HCT116 (cell line): ENCODE measurements at regions of chr6 and their contacts with region 1.

Region 1: DNA sequence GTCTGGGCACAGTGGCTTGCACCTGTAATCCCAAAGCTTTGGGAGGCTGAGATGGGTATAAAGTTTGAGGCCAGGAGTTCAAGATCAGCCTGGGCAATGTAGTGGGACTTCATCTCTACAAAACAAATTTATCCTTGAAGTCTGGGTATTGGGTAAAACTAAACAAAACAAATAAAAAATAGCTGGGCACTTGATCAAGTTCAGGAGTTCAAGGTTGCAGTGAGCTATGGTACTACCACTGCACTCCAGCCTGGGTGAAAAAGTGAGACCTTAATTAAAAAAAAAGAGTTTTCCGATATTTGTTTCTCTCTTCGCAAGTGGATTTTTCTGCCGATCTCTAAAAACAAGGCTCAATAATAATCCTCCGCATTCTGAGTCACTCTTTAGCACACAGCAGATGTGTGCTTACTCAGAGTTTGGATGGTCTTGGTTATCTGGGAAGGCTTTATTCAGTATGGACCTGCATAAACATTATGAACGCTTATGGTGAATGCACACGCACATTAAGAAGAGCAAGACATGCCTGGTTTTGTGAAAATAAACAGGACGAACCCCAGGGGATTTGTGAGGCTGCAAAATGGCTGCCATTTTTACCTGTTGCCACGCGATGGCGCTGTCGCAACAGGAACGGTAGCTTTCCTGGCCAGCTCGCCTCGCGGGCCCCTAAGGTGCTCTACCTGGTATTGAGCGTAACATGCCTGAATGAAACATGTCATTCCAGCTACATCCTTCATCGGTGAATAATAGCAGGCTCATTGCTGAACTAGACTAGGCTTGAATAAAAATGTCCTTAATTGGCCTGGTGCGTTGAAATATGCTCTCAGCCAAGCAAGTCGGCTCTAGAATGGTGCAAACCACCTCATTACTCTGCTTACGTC is 6.0 kb downstream of the OPN5 start:
- DNase-seq: peak; percentile 58
- ATAC-seq: peak; percentile 96
- H3K4me3 ChIP-seq: 0 out of 4 replicates have a peak overlapping the region, but pooled peaks of 1 of the 2 experiments have one; percentile 1
- H3K27ac ChIP-seq: no peak overlapping the region
- H3K4me1 ChIP-seq: peaks cover 0 to 6% of the 10 kb centered on the region in 2 experiments; a peak in 1 of 4 replicates
- H3K27me3 ChIP-seq: no peaks in the 10 kb centered on the region
- CTCF ChIP-seq: peak; percentile 76 to 92 (median 83); a peak in 5 of 6 replicates
- POLR2A ChIP-seq: no peak
- RAD21 ChIP-seq: peak; percentile 98

Region 2: DNA sequence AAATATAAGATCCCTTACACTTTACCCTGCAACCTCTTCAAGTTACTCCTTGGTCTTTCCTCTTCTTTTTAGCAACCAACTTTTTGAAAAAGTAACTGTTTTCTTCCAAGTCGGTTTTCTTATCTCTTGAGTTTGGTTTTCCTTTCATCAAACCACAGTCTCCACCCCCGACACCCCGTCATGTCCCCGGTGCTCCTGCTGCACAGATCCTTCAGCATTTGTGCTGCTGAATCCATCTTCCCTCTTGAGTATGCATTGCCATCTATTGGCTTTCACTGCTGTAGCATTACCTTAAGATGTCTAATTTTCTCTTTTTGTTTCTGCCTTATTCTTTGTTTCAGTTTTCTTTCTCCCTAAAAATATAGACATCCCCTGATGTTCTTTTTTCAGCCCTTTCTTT is 466.3 kb before region 1 on chr6:
- CTCF ChIA-PET with region 1: no interaction called
- POLR2A ChIA-PET with region 1: no interaction called
- RAD21 ChIA-PET with region 1: no interaction called
- intact Hi-C with region 1: no loop called
- DNase-seq: no peak
- ATAC-seq: no peak
- H3K4me3 ChIP-seq: no peak overlapping the region
- H3K27ac ChIP-seq: no peak overlapping the region
- H3K4me1 ChIP-seq: no peaks in the 10 kb centered on the region
- H3K27me3 ChIP-seq: no peaks in the 10 kb centered on the region
- CTCF ChIP-seq: no peak
- POLR2A ChIP-seq: no peak
- RAD21 ChIP-seq: no peak

Region 3: GRCh38 chr6:47631269-47631772 is 156.5 kb before region 1 on chr6:
- CTCF ChIA-PET with region 1: interaction called, 23 read pairs
- POLR2A ChIA-PET with region 1: no interaction called
- RAD21 ChIA-PET with region 1: no interaction called
- intact Hi-C with region 1: no loop called
- DNase-seq: peak; percentile 55
- ATAC-seq: peak; percentile 77
- H3K4me3 ChIP-seq: no peak overlapping the region
- H3K27ac ChIP-seq: no peak overlapping the region
- H3K4me1 ChIP-seq: no peaks in the 10 kb centered on the region
- H3K27me3 ChIP-seq: no peaks in the 10 kb centered on the region
- CTCF ChIP-seq: peak; percentile 34 to 74 (median 66); a peak in 5 of 6 replicates
- POLR2A ChIP-seq: no peak
- RAD21 ChIP-seq: peak; percentile 86

Region 4: DNA sequence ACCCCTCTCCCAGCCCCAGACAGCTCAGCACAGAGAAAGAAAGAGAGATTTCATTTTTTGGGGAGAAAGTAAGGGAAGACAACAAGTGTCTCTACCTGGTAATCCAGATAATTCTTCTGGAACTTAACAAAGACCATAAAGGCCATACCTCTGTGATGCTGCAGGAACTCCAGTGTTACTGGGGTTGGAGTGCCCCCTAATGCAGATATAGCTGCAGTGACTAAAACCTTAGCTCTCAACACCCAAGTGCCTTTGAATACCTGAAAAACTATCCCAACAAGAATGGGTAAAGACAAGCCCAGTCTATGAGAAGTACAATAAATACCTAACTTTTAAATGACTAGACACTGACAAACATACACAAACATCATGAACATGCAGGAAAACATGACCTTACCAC is 688.4 kb after region 1 on chr6:
- CTCF ChIA-PET with region 1: interaction called, 16 read pairs
- POLR2A ChIA-PET with region 1: no interaction called
- RAD21 ChIA-PET with region 1: no interaction called
- intact Hi-C with region 1: loop called (anchors 2 kb)
- DNase-seq: no peak
- ATAC-seq: 0 out of 2 replicates have a peak, but pooled peaks have one; percentile 50
- H3K4me3 ChIP-seq: no peak overlapping the region
- H3K27ac ChIP-seq: no peak overlapping the region
- H3K4me1 ChIP-seq: no peaks in the 10 kb centered on the region
- H3K27me3 ChIP-seq: no peaks in the 10 kb centered on the region
- CTCF ChIP-seq: peak; percentile 26 to 32 (median 31); a peak in 4 of 6 replicates
- POLR2A ChIP-seq: no peak
- RAD21 ChIP-seq: peak; percentile 61

Region 5: DNA sequence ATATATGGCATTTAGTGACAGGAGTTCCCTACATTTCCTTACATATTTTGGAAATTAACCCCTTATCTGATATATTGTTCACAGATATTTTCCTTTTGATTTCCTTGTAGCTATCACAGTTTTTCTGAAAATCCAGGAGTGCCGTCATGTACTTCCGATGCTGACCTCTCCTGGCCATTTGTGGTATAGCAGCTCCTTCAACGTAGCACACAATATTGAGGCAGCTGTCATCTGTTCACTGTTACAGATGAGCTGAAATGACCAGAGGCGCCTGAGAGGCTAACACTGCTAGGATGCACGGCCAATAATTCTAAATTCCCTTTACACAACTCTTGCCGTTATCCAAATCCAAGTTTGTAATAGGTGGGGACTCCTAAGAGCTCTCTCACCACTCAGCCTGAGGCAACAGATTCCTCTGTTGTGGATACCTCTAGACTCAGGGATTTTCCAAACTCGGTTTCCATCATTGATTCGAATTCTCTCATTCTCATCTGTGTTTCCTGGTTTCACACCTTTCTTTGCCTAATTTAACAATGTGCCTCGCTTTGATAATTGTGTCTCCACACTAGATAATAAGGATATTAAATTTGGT is 1622.2 kb after region 1 on chr6:
- CTCF ChIA-PET with region 1: interaction called, 38 read pairs
- POLR2A ChIA-PET with region 1: no interaction called
- RAD21 ChIA-PET with region 1: interaction called in 1 of 2 experiments, 4 read pairs
- intact Hi-C with region 1: no loop called
- DNase-seq: peak; percentile 54
- ATAC-seq: peak; percentile 89
- H3K4me3 ChIP-seq: no peak overlapping the region
- H3K27ac ChIP-seq: no peak overlapping the region
- H3K4me1 ChIP-seq: no peaks in the 10 kb centered on the region
- H3K27me3 ChIP-seq: no peaks in the 10 kb centered on the region
- CTCF ChIP-seq: peak; percentile 54 to 86 (median 84); a peak in 5 of 6 replicates
- POLR2A ChIP-seq: no peak
- RAD21 ChIP-seq: peak; percentile 82

Region 6: DNA sequence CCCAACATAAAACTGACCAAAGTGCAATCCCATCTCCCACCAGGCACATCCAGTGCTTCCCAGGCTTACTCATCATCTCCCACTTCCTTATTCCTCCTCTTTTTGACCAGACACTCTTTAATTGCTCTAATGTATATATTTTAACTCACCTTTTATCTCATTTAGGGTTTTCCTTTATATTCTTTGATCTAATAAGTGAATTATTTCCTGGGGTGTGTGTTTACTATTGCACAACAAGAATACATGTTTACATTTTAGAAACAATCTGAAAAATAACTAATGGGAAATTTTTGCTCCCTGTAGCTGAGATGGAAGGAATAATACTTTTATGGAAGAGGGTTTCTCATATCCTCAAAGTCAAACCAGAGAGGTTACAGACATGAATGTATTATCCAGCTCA is 1830.4 kb after region 1 on chr6:
- CTCF ChIA-PET with region 1: interaction called, 3 read pairs
- POLR2A ChIA-PET with region 1: no interaction called
- RAD21 ChIA-PET with region 1: no interaction called
- intact Hi-C with region 1: loop called (anchors 10 kb)
- DNase-seq: no peak
- ATAC-seq: no peak
- H3K4me3 ChIP-seq: no peak overlapping the region
- H3K27ac ChIP-seq: no peak overlapping the region
- H3K4me1 ChIP-seq: peaks cover 6 to 8% of the 10 kb centered on the region in 2 experiments; a peak in 2 of 4 replicates
- H3K27me3 ChIP-seq: no peaks in the 10 kb centered on the region
- CTCF ChIP-seq: no peak
- POLR2A ChIP-seq: no peak
- RAD21 ChIP-seq: no peak